SK-N-SH (cell line): ENCODE measurements at regions of chr5 and their contacts with region 1.

Region 1: DNA sequence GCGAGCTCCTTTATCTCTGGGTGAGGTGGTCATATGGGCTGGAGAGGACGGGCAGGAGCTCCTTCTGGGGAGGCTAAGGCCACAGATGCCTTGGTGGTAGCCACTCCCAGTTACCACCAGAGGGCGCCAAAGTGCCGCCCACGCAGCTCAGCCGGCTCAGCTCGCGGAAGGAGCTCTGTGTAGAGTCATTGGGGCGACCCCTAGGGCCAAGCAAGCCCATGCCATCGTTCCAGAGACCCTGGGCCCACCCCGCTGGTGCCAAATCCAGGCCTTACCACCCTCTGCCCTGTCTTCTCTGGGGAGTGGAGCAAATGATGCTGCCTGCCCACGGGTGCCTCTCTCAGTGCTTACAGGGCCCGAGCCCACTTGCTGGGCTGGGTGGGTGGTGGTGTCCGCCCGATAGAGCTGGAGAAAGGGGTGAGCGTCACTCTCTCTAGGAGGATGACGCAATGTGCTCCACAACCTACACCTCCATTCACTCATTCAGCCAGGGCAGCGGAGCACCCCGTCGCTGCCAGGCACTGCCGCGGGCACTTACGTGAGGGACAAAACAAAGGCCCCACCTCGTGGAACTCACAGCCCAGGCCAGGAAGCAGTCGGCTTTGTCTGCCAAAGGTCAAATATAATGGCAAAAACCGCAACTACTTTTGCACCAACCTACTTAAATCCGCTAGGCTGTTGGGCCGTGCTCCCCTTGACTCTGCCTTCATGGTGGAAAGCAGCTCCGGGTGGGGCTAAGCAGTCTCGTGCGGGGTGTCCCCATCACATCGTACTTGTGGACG is 13.8 kb downstream of the TSPAN17 start:
- DNase-seq: peak; percentile 92
- H3K4me3 ChIP-seq: no peak overlapping the region; a peak in 1 of 4 replicates
- H3K27ac ChIP-seq: no peak overlapping the region
- H3K4me1 ChIP-seq: peaks cover 0 to 23% of the 10 kb centered on the region in 2 experiments; a peak in 1 of 4 replicates
- H3K27me3 ChIP-seq: no peaks in the 10 kb centered on the region
- CTCF ChIP-seq: peak; percentile 92
- EP300 ChIP-seq: no peak
- RAD21 ChIP-seq: peak; percentile 97

Region 2: GRCh38 chr5:176675675-176676360 is 14.8 kb after region 1 on chr5:
- CTCF ChIA-PET with region 1: interaction called, 25 read pairs
- POLR2A ChIA-PET with region 1: no interaction called
- DNase-seq: no peak
- H3K4me3 ChIP-seq: no peak overlapping the region; a peak in 1 of 4 replicates
- H3K27ac ChIP-seq: no peak overlapping the region
- H3K4me1 ChIP-seq: peaks cover 0 to 7% of the 10 kb centered on the region in 2 experiments; a peak in 1 of 4 replicates
- H3K27me3 ChIP-seq: no peaks in the 10 kb centered on the region
- CTCF ChIP-seq: peak; percentile 53
- EP300 ChIP-seq: no peak
- RAD21 ChIP-seq: no peak

Region 3: GRCh38 chr5:176739461-176740051 is 78.5 kb after region 1 on chr5:
- CTCF ChIA-PET with region 1: interaction called, 24 read pairs
- POLR2A ChIA-PET with region 1: no interaction called
- DNase-seq: peak; percentile 66
- H3K4me3 ChIP-seq: no peak overlapping the region
- H3K27ac ChIP-seq: peak overlapping the region in 1 of 2 experiments; percentile 78; a peak in 2 of 4 replicates
- H3K4me1 ChIP-seq: peaks cover 0 to 52% of the 10 kb centered on the region in 2 experiments; a peak in 2 of 4 replicates
- H3K27me3 ChIP-seq: no peaks in the 10 kb centered on the region; the same call in 1 of the 2 replicates
- CTCF ChIP-seq: no peak
- EP300 ChIP-seq: no peak
- RAD21 ChIP-seq: no peak

Region 4: GRCh38 chr5:176817841-176818377 is 156.9 kb after region 1 on chr5:
- CTCF ChIA-PET with region 1: interaction called, 167 read pairs
- POLR2A ChIA-PET with region 1: no interaction called
- DNase-seq: peak; percentile 86
- H3K4me3 ChIP-seq: peak overlapping the region; percentile 48 to 61
- H3K27ac ChIP-seq: peak overlapping the region in 1 of 2 experiments; percentile 73; a peak in 2 of 4 replicates
- H3K4me1 ChIP-seq: peaks cover 0 to 42% of the 10 kb centered on the region in 2 experiments; a peak in 1 of 4 replicates
- H3K27me3 ChIP-seq: peaks cover 10% of the 10 kb centered on the region
- CTCF ChIP-seq: peak; percentile 60
- EP300 ChIP-seq: no peak
- RAD21 ChIP-seq: peak; percentile 42; the same call in 1 of the 2 replicates

Region 5: DNA sequence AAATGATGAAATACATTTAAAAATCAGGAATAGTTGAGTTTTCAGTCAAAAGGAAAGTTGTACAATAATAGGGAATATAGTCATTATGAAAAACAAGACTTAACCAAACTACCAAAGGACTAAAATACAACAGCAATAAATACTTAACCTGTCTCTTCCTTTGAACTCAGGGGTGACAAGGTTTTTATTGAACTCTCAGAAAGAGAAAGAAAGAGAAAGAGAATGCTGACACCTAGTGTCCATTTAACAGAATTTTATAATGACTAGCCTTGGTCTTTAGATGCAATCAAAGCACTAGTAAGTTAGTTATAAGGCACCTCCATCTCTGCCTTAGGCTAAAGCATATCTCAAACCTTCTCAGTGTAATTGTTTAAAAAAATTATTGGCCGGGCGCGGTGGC is 298.0 kb after region 1 on chr5:
- CTCF ChIA-PET with region 1: interaction called, 53 read pairs
- POLR2A ChIA-PET with region 1: interaction called, 4 read pairs
- DNase-seq: peak; percentile 54
- H3K4me3 ChIP-seq: no peak overlapping the region; a peak in 1 of 4 replicates
- H3K27ac ChIP-seq: no peak overlapping the region
- H3K4me1 ChIP-seq: peaks cover 7 to 8% of the 10 kb centered on the region in 2 experiments; a peak in 3 of 4 replicates
- H3K27me3 ChIP-seq: no peaks in the 10 kb centered on the region
- CTCF ChIP-seq: peak; percentile 64
- EP300 ChIP-seq: no peak
- RAD21 ChIP-seq: peak; percentile 80

Region 6: GRCh38 chr5:177022384-177023308 is 361.6 kb after region 1 on chr5 and contains the start of gene ZNF346:
- CTCF ChIA-PET with region 1: interaction called, 11 read pairs
- POLR2A ChIA-PET with region 1: no interaction called
- DNase-seq: peak; percentile 97
- H3K4me3 ChIP-seq: peak within 1 kb of the TSS; percentile 77 to 94
- H3K27ac ChIP-seq: peak within 1 kb of the TSS; percentile 61 to 80
- H3K4me1 ChIP-seq: peaks cover 0 to 5% of the 10 kb centered on the region in 2 experiments; a peak in 1 of 4 replicates
- H3K27me3 ChIP-seq: no peaks in the 10 kb centered on the region
- CTCF ChIP-seq: peak; percentile 55
- EP300 ChIP-seq: no peak
- RAD21 ChIP-seq: no peak
- polyA plus RNA-seq, gene ZNF346: 15.1 and 19.6 TPM in 2 replicates